ENCODE measurements at regions of chr1 and their contacts with region 1.

Region 1: GRCh38 chr1:172826096-172826743 is 167.3 kb downstream of the FASLG start:
- DNase-seq: no peak
- ATAC-seq: peak; percentile 74
- H3K4me3 Mint-ChIP-seq: no peak overlapping the region
- H3K27ac Mint-ChIP-seq: no peak overlapping the region
- H3K4me1 Mint-ChIP-seq: peaks cover 5% of the 10 kb centered on the region
- H3K27me3 Mint-ChIP-seq: peaks cover 25% of the 10 kb centered on the region

Region 2: GRCh38 chr1:172497230-172497629 is 329.0 kb before region 1 on chr1:
- CTCF ChIA-PET with region 1: no interaction called
- DNase-seq: no peak
- ATAC-seq: no peak
- H3K4me3 Mint-ChIP-seq: no peak overlapping the region
- H3K27ac Mint-ChIP-seq: no peak overlapping the region
- H3K4me1 Mint-ChIP-seq: no peaks in the 10 kb centered on the region
- H3K27me3 Mint-ChIP-seq: peaks cover 7% of the 10 kb centered on the region

Region 3: GRCh38 chr1:172745014-172745413 is 81.2 kb before region 1 on chr1:
- CTCF ChIA-PET with region 1: interaction called, 21 read pairs
- DNase-seq: peak; percentile 56
- ATAC-seq: peak; percentile 69
- H3K4me3 Mint-ChIP-seq: no peak overlapping the region
- H3K27ac Mint-ChIP-seq: no peak overlapping the region
- H3K4me1 Mint-ChIP-seq: peaks cover 28% of the 10 kb centered on the region
- H3K27me3 Mint-ChIP-seq: peaks cover 53% of the 10 kb centered on the region

Region 4: DNA sequence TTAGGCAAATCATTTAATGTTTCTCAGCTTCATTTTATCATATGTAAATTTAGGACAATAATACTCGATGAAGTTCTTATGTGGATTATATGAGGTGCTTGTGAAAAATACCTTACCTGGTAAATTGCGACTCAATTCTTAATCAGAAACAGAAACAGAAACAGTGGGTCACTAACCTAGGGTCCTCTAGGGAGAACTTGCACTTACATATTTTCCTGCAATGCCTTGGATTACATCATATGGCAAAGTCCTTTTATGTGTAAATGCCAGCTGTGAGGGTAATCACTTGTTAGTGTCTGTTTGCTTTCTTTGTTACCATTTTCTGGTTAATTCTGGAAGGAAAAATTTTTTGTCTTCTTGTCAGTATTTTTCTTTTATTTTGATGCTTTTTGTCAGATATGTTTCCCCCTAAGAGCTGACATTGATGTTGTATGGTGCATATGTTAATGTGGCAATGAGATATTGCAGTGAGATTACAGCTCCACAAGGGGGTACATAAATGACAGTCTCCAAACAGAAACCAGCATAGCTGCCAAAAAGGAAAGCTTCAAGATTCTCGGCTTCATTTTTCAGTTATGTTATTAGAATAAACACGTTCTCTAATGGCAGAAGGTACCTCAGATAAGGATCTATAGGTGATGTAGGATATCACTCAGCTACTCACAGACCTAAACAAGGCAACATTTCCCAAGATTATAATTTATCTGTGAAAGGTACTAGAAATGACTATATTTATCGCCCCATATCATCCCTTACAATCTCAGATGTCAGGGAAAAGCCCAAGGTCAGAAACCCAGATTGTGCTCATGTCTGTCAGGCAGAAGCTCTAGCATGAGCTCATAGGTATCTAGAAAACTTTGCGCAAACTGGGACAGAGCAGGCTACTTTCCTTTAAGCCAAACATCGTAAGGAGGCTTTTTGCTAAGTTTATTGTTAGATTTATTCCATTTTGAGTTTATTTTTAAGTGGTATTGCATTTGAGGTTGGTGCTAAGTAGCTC is 47.5 kb before region 1 on chr1:
- CTCF ChIA-PET with region 1: interaction called, 10 read pairs
- DNase-seq: no peak
- ATAC-seq: peak; percentile 82
- H3K4me3 Mint-ChIP-seq: peak overlapping the region; percentile 27
- H3K27ac Mint-ChIP-seq: peak overlapping the region; percentile 25
- H3K4me1 Mint-ChIP-seq: peaks cover 25% of the 10 kb centered on the region
- H3K27me3 Mint-ChIP-seq: peaks cover 21% of the 10 kb centered on the region

Region 5: GRCh38 chr1:172815740-172816139 is 10.5 kb before region 1 on chr1:
- CTCF ChIA-PET with region 1: interaction called, 12 read pairs
- DNase-seq: no peak
- ATAC-seq: no peak
- H3K4me3 Mint-ChIP-seq: no peak overlapping the region
- H3K27ac Mint-ChIP-seq: no peak overlapping the region
- H3K4me1 Mint-ChIP-seq: peaks cover 52% of the 10 kb centered on the region
- H3K27me3 Mint-ChIP-seq: peaks cover 13% of the 10 kb centered on the region

Region 6: DNA sequence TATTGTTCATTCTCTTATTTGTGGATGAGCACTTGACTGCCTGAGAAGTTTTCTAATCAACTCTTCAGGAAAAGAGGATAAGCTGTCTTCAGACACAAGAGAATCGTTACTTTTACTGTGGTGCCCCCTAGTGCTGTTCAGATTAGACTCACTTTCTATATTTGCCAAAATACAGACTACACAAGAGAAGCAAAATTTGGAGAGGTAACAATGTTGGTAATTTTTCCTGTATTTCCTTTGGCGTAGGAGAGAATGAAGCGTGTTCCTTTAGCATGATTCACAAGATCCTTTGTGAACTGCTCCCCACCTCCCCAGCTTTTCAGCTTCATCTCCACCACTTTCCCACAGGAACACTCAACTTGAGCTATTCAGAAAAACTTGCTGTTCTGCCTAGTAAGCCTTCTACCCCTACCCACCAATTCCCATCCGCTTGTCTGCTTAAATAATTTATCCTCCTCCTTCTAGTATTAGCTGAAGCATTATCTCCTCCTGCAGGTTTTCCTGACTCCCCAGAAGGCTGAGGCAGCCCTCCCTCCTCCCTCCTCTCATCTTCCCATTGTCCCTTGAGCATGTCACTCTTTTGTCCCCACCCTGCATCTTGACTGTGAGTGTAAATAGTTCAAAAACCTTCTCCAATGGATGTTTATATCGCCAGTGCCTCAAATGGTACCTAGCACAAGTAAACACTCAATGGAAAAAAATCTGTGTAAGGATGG is 376.4 kb after region 1 on chr1:
- CTCF ChIA-PET with region 1: interaction called, 77 read pairs
- DNase-seq: no peak
- ATAC-seq: no peak
- H3K4me3 Mint-ChIP-seq: no peak overlapping the region
- H3K27ac Mint-ChIP-seq: no peak overlapping the region
- H3K4me1 Mint-ChIP-seq: peaks cover 35% of the 10 kb centered on the region
- H3K27me3 Mint-ChIP-seq: peaks cover 43% of the 10 kb centered on the region